ENCODE measurements at regions of chr13 and their contacts with region 1.

Region 1: DNA sequence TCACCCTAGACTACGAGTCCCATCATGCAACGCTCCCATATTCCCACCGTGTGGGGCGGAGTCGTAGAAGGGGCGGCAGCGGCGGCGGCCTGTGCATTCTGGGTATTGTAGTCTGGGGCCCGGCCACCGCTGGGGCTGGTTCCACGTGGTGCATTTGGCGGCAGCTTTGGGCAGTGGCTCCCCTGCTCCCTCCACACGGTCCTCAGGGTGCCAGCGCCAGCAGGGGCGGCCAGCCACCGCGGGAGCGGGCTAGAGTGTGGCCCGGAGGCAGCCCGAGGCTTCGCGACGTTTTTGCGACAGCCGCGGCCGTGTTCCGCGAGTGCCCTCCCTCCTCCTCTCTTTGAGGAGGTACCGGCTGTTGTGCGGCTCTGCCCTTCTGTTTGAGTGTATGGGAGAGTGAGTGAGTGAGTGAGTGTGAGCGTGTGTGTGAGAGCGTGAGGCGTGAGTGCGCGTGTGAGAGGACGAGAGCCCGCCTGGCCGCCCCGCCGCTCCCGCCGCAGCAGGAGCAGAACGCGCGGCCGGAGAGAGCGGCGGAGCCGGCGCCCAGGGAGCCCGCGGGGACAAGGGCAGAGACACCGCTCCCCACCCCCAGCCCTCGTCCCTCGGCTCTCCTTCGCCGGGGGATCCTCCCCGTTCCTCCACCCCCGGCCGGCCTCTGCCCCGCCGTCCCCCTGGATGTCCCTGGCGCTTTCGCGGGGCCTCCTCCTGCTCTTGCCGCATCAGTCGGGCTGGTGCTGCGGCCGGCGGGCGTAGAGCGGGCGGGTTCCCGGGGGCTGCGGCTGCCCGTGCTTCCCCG is at the start of gene CDK8:
- DNase-seq: peak; percentile 95
- H3K4me3 ChIP-seq: peak within 1 kb of the TSS; percentile 74 to 90 (median 84)
- H3K27ac ChIP-seq: peak within 1 kb of the TSS; percentile 58
- H3K4me1 ChIP-seq: peaks cover 9% of the 10 kb centered on the region
- H3K27me3 ChIP-seq: no peaks in the 10 kb centered on the region
- CTCF ChIP-seq: no peak
- total RNA-seq, gene CDK8: 22.0 to 23.6 TPM

Region 2: DNA sequence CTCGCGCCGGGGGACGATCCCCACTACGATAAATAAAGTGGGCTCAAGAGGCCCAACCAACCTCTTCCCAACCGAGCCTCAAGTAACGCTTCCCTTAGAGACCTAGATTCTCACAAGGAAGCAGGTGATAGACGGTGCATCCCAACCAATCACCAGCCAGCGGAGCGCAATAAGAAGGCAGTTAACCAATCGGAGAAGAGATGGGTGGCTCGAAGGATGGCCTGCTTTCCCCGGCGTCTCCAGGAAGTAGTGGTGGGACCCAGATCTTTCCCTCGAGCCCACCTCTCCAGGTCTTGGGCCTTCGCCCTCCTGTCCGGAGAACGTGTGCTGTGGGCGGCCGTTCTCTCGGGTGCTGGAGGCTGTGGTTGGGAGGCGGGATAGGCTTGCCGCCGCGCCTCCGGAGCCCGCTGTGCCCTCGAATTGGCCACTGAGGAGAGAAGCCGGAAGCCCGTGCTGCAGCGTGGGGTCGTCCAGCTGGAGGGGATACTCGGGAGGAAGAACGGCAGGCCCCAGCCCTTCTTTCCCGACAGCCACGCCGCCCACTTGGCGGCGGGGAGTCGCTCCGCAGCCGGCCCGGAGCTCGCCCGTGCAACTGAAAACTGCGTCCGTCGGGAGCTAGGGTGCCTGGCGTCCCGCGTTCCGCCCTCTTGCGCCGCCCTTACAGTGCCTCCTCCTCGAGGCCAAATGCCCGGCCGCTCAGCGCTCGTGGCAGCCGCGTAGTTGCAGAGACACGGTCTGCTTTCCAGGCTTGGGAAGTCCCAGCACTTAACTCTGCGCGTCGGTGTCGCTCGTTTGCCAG is 32.1 kb before region 1 on chr13 and contains the start of gene RNF6:
- CTCF ChIA-PET with region 1: no interaction called
- dilution Hi-C with region 1: no loop called
- in situ Hi-C with region 1: no loop called
- intact Hi-C with region 1: loop called (anchors 1 kb)
- DNase-seq: peak; percentile 99
- H3K4me3 ChIP-seq: peak within 1 kb of the TSS; percentile 82 to 87 (median 86)
- H3K27ac ChIP-seq: peak within 1 kb of the TSS; percentile 79
- H3K4me1 ChIP-seq: peaks cover 17% of the 10 kb centered on the region
- H3K27me3 ChIP-seq: no peaks in the 10 kb centered on the region
- CTCF ChIP-seq: no peak
- total RNA-seq, gene RNF6: 57.8 to 63.5 TPM

Region 3: DNA sequence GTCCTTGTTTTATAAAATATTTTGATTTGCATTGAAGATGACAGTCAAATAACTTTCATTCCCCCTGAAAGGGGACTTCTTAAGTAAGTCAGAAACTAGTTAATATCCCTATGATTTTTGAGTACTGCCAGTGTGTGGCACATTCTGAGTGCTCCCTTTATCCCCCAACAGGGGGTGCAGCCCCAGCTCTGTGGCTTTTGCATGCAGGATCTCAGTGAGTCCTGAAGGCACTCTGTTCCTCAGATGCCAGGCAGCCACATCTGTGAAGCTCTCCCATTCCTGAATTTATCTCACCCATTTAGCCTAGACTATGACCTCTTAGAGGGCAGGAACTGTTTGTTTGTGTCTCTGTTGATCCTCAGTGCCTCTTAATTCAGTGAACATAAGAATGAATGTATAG is 123.1 kb after region 1 on chr13:
- CTCF ChIA-PET with region 1: interaction called, 8 read pairs
- dilution Hi-C with region 1: no loop called
- in situ Hi-C with region 1: no loop called
- intact Hi-C with region 1: loop called (anchors 10 kb)
- DNase-seq: peak; percentile 4
- H3K4me3 ChIP-seq: no peak overlapping the region
- H3K27ac ChIP-seq: no peak overlapping the region
- H3K4me1 ChIP-seq: no peaks in the 10 kb centered on the region
- H3K27me3 ChIP-seq: no peaks in the 10 kb centered on the region
- CTCF ChIP-seq: peak; percentile 49 to 53

Region 4: DNA sequence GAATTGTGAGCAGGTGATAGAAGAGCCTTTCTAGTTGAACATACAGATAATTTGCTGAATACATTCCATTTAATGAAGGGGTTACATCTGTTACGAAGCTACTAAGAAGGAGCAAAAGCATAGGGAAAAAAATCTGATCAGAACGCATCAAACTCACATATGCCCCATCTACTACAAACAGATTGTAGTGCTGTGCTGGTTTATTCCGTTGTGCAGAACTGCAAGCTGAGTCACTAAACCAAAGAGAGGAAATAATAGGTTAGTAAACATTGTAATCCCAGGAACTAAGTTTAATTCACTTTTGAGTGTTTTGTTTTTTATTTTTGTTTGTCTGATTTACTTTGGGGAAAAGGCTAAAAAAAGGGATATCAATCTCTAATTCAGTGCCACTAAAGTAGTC is 136.2 kb after region 1 on chr13:
- CTCF ChIA-PET with region 1: no interaction called
- dilution Hi-C with region 1: no loop called
- in situ Hi-C with region 1: no loop called
- intact Hi-C with region 1: no loop called
- DNase-seq: no peak
- H3K4me3 ChIP-seq: no peak overlapping the region
- H3K27ac ChIP-seq: no peak overlapping the region
- H3K4me1 ChIP-seq: no peaks in the 10 kb centered on the region
- H3K27me3 ChIP-seq: no peaks in the 10 kb centered on the region
- CTCF ChIP-seq: no peak